ENCODE measurements at regions of chr9 and their contacts with region 1.

Region 1: DNA sequence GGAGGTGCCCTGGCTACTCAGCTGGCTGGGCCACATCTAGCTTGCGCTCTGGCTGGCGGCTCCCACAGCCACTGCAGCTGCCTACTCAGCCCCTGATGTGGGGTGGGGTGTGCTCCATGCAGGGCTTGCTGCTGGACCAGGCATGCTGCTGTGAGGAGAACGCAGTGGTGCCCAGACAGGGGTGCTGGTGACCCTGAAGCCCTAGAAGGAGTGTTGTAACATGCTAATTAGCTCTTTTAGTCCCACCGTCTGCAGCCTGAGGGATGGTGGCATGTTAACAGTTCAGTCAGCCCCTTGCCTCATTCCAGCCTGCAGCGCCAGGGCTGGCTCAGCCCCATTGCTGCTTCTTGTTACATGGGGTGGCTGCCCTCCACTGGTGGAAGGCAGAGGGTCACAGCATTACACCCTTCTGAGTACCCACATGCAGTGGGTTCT is 642.3 kb downstream of the DMRTA1 start:
- DNase-seq: no peak
- ATAC-seq: peak; percentile 78
- H3K4me3 ChIP-seq: no peak overlapping the region
- H3K27ac ChIP-seq: no peak overlapping the region
- H3K4me1 ChIP-seq: no peaks in the 10 kb centered on the region
- H3K27me3 ChIP-seq: no peaks in the 10 kb centered on the region
- CTCF ChIP-seq: peak in 2 of 3 experiments; percentile 25 to 56; a peak in 2 of 6 replicates
- EP300 ChIP-seq: no peak
- POLR2A ChIP-seq: no peak
- RAD21 ChIP-seq: peak; percentile 39; the same call in 1 of the 2 replicates

Region 2: DNA sequence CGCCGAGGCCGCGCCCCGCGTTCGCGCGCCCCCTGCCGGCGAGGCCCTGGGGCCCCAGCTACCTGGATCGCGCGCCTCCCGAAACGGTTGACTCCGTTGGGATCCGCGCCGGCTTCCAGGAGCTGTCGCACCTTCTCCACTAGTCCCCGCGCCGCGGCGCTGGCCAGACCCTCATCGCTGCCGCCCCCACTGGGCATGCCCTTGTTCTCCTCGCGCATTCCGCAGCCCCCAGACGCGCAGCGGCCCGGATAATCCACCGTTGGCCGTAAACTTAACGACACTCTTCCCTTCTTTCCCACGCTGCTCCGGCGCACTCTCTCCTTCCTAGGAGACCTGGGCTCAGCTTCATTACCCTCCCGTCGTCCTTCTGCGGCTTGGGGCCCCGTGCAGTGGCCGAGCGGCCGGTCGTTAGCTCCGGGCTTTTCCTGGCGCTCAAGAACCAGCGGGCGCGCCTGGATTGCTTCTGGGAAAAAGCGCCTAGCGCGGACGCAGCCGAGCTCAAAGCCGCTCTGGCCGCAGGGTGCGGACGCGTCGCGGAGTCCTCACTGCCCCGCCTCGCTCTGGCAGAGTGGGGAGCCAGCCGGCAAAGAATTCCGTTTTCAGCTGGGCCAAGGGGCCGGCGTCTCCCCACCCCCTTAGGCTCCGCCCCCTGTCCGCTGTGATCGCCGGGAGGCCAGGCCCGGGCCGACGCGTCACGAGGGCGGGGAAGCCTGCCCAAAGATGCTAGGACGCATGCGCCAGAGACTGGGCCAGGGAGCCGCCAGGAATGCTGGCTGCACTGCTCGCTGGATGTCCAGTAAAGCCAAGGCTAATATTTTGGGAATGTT is 1080.0 kb before region 1 on chr9 and contains the start of gene CDKN2B:
- CTCF ChIA-PET with region 1: no interaction called
- POLR2A ChIA-PET with region 1: no interaction called
- RAD21 ChIA-PET with region 1: no interaction called
- SMC1A ChIA-PET with region 1: no interaction called
- in situ Hi-C with region 1: no loop called
- intact Hi-C with region 1: no loop called
- DNase-seq: no peak
- ATAC-seq: peak; percentile 98
- H3K4me3 ChIP-seq: peak within 1 kb of the TSS; percentile 66
- H3K27ac ChIP-seq: no peak within 1 kb of the TSS
- H3K4me1 ChIP-seq: peaks cover 10% of the 10 kb centered on the region
- H3K27me3 ChIP-seq: peaks cover 0 to 2% of the 10 kb centered on the region in 2 experiments; a peak in 1 of 4 replicates
- CTCF ChIP-seq: peak; percentile 87 to 88 (median 87)
- EP300 ChIP-seq: no peak
- POLR2A ChIP-seq: peak; percentile 59
- RAD21 ChIP-seq: peak; percentile 65
- polyA plus RNA-seq, gene CDKN2B: 0.04 to 0.08 TPM

Region 3: DNA sequence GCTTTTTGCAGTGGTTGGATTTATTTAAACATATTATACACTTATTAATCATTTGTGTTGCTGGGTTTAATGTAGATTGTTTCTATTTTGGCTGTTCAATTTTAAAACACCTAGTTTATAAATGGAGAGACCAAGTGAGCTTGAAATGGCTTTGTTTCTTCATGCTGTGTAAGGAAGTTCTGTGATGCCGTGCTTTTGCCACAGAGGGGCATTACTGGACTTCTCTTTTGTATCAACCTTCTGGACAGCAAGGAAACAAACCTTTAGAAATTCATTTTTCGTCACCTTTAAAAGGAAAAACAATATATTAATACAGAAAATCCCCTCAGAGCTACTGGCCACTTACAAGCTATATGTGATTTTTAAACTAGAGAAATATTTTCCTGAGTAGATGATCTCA is 560.5 kb before region 1 on chr9:
- CTCF ChIA-PET with region 1: interaction called, 10 read pairs
- POLR2A ChIA-PET with region 1: no interaction called
- RAD21 ChIA-PET with region 1: interaction called, 8 read pairs
- SMC1A ChIA-PET with region 1: no interaction called
- in situ Hi-C with region 1: no loop called
- intact Hi-C with region 1: no loop called
- DNase-seq: no peak
- ATAC-seq: peak; percentile 53; the same call in 2 of the 3 replicates
- H3K4me3 ChIP-seq: no peak overlapping the region
- H3K27ac ChIP-seq: no peak overlapping the region
- H3K4me1 ChIP-seq: no peaks in the 10 kb centered on the region
- H3K27me3 ChIP-seq: no peaks in the 10 kb centered on the region
- CTCF ChIP-seq: peak in 1 of 3 experiments; percentile 4; a peak in 2 of 6 replicates
- EP300 ChIP-seq: no peak
- POLR2A ChIP-seq: no peak
- RAD21 ChIP-seq: no peak

Region 4: DNA sequence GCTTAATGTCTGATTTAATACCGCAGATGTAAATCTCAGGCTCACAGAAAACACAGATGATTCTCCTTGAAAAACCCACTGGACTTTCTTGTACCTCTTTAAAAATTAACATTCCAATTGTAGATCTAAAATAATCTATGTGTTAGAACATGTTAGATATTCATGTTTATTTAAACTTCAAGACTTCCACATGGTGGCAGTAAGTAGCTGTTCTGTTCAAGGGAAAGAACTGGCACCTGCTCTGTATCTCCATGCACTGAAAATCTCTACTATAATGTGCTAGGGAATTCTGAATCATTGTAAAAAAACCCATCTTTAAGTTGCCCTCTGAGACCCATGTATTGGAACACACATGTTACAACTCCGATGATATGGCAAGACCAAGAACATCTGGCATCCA is 275.4 kb before region 1 on chr9:
- CTCF ChIA-PET with region 1: interaction called, 15 read pairs
- POLR2A ChIA-PET with region 1: no interaction called
- RAD21 ChIA-PET with region 1: interaction called, 18 read pairs
- SMC1A ChIA-PET with region 1: interaction called, 9 read pairs
- in situ Hi-C with region 1: no loop called
- intact Hi-C with region 1: loop called (anchors 5 kb)
- DNase-seq: no peak
- ATAC-seq: peak; percentile 74
- H3K4me3 ChIP-seq: no peak overlapping the region
- H3K27ac ChIP-seq: no peak overlapping the region
- H3K4me1 ChIP-seq: no peaks in the 10 kb centered on the region
- H3K27me3 ChIP-seq: no peaks in the 10 kb centered on the region
- CTCF ChIP-seq: peak in 1 of 3 experiments; percentile 49; a peak in 2 of 6 replicates
- EP300 ChIP-seq: no peak
- POLR2A ChIP-seq: no peak
- RAD21 ChIP-seq: peak; percentile 55

Region 5: DNA sequence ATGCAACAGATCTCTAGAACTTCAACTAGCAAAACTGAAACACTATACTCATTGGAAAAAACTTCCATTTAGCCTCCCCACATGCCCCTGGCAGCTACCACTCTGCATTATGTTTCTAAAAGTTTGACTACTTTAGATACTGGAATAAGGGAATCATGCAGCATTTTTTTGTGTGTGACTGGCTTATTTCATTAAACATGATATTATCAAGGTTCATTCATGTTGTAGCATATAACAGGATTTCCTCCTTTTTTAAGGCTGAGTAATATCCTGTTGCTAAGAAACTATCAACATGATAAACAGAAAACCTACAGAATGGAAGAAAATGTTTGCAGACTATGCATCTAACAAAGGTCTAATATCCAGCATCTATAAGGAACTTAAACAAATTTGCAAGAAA is 44.4 kb before region 1 on chr9:
- CTCF ChIA-PET with region 1: no interaction called
- POLR2A ChIA-PET with region 1: no interaction called
- RAD21 ChIA-PET with region 1: no interaction called
- SMC1A ChIA-PET with region 1: no interaction called
- in situ Hi-C with region 1: loop called (anchors 5 kb)
- intact Hi-C with region 1: no loop called
- DNase-seq: no peak
- ATAC-seq: no peak
- H3K4me3 ChIP-seq: no peak overlapping the region
- H3K27ac ChIP-seq: no peak overlapping the region
- H3K4me1 ChIP-seq: no peaks in the 10 kb centered on the region
- H3K27me3 ChIP-seq: no peaks in the 10 kb centered on the region
- CTCF ChIP-seq: no peak
- EP300 ChIP-seq: no peak
- POLR2A ChIP-seq: no peak
- RAD21 ChIP-seq: no peak